Activated B cell treated with CpG ODN at 0.5 μM for 24 hours (primary cell): ENCODE measurements at regions of chr20 and their contacts with region 1.

Region 1: GRCh38 chr20:46022411-46023147 is 6.4 kb upstream of the SLC12A5 start:
- DNase-seq: peak; percentile 73
- ATAC-seq: peak; percentile 62
- H3K4me3 Mint-ChIP-seq: peak overlapping the region; percentile 70
- H3K27ac Mint-ChIP-seq: no peak overlapping the region
- H3K4me1 Mint-ChIP-seq: peaks cover 24% of the 10 kb centered on the region
- H3K27me3 Mint-ChIP-seq: peaks cover 47% of the 10 kb centered on the region
- CTCF ChIP-seq: no peak

Region 2: GRCh38 chr20:46117704-46118467 is 95.3 kb after region 1 on chr20 and contains the start of gene CD40:
- CTCF ChIA-PET with region 1: interaction called, 3 read pairs
- POLR2A ChIA-PET with region 1: interaction called, 4 read pairs
- intact Hi-C with region 1: loop called (anchors 1 kb)
- DNase-seq: peak; percentile 91
- ATAC-seq: peak; percentile 76
- H3K4me3 Mint-ChIP-seq: peak within 1 kb of the TSS; percentile 100
- H3K27ac Mint-ChIP-seq: peak within 1 kb of the TSS; percentile 100
- H3K4me1 Mint-ChIP-seq: peaks cover 60% of the 10 kb centered on the region
- H3K27me3 Mint-ChIP-seq: no peaks in the 10 kb centered on the region
- CTCF ChIP-seq: no peak
- total RNA-seq, gene CD40: 410 and 464 TPM in 2 replicates

Region 3: GRCh38 chr20:46174469-46175128 is 152.0 kb after region 1 on chr20:
- CTCF ChIA-PET with region 1: interaction called, 18 read pairs
- POLR2A ChIA-PET with region 1: no interaction called
- intact Hi-C with region 1: loop called (anchors 1 kb)
- DNase-seq: peak; percentile 69
- ATAC-seq: peak; percentile 97
- H3K4me3 Mint-ChIP-seq: no peak overlapping the region
- H3K27ac Mint-ChIP-seq: no peak overlapping the region
- H3K4me1 Mint-ChIP-seq: no peaks in the 10 kb centered on the region
- H3K27me3 Mint-ChIP-seq: peaks cover 49% of the 10 kb centered on the region
- CTCF ChIP-seq: no peak

Region 4: GRCh38 chr20:46283426-46284039 is 261.0 kb after region 1 on chr20:
- CTCF ChIA-PET with region 1: no interaction called
- POLR2A ChIA-PET with region 1: interaction called, 16 read pairs
- intact Hi-C with region 1: no loop called
- DNase-seq: no peak
- ATAC-seq: no peak
- H3K4me3 Mint-ChIP-seq: no peak overlapping the region
- H3K27ac Mint-ChIP-seq: no peak overlapping the region
- H3K4me1 Mint-ChIP-seq: no peaks in the 10 kb centered on the region
- H3K27me3 Mint-ChIP-seq: peaks cover 42% of the 10 kb centered on the region
- CTCF ChIP-seq: no peak

Region 5: DNA sequence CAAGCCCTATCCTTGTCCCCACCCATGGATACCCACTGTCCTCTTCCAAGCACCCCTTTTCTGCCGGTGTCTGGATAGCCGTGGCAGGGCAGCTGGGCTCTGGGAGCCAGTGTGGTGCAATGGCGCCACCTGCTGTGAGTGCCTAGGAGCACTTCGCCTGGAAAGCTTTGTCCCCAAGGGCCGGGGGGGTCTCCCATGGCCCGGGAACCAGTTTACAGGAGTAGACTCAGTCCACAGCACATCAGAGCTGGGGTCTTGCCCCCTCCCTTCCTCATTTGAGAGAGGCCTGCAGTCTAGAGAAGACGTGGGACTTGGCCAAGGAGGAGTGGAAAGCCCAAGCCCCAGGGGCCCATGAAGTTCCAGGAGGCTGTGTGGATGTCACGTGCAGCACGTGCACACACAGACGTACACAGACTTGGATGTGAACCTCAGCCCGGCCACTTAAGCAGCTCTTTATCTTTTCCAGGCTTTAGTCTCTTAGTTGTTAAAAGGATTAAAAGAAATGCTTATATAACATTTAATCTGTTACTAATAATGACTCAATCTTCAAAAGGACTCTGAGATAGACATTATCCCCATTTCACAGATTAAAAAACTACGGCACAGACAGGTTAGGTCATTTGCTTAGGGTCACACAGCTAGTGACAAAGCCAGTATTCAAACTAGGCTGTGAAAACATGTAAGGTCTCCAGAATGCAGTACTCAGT is 326.6 kb after region 1 on chr20:
- CTCF ChIA-PET with region 1: interaction called, 5 read pairs
- POLR2A ChIA-PET with region 1: no interaction called
- intact Hi-C with region 1: loop called (anchors 2 kb)
- DNase-seq: peak; percentile 40
- ATAC-seq: no peak
- H3K4me3 Mint-ChIP-seq: no peak overlapping the region
- H3K27ac Mint-ChIP-seq: no peak overlapping the region
- H3K4me1 Mint-ChIP-seq: peaks cover 28% of the 10 kb centered on the region
- H3K27me3 Mint-ChIP-seq: no peaks in the 10 kb centered on the region
- CTCF ChIP-seq: no peak

Region 6: GRCh38 chr20:46689082-46689754 is 666.6 kb after region 1 on chr20 and contains the start of gene TP53RK:
- CTCF ChIA-PET with region 1: no interaction called
- POLR2A ChIA-PET with region 1: no interaction called
- intact Hi-C with region 1: loop called (anchors 10 kb)
- DNase-seq: peak; percentile 89
- ATAC-seq: peak; percentile 97
- H3K4me3 Mint-ChIP-seq: peak within 1 kb of the TSS; percentile 97
- H3K27ac Mint-ChIP-seq: peak within 1 kb of the TSS; percentile 95
- H3K4me1 Mint-ChIP-seq: peaks cover 43% of the 10 kb centered on the region
- H3K27me3 Mint-ChIP-seq: no peaks in the 10 kb centered on the region
- CTCF ChIP-seq: no peak
- total RNA-seq, gene TP53RK: 18.6 and 18.8 TPM in 2 replicates